PC-3 (cell line): ENCODE measurements at regions of chr5 and their contacts with region 1.

Region 1: GRCh38 chr5:80255732-80256479 is at the start of gene SERINC5:
- DNase-seq: peak; percentile 51
- ATAC-seq: peak; percentile 72
- H3K4me3 ChIP-seq: peak within 1 kb of the TSS; percentile 88
- H3K27ac ChIP-seq: peak within 1 kb of the TSS; percentile 44
- H3K4me1 ChIP-seq: peaks cover 19% of the 10 kb centered on the region
- H3K27me3 ChIP-seq: no peaks in the 10 kb centered on the region
- CTCF ChIP-seq: no peak
- total RNA-seq, gene SERINC5: 5.7 and 6.9 TPM in 2 replicates

Region 2: DNA sequence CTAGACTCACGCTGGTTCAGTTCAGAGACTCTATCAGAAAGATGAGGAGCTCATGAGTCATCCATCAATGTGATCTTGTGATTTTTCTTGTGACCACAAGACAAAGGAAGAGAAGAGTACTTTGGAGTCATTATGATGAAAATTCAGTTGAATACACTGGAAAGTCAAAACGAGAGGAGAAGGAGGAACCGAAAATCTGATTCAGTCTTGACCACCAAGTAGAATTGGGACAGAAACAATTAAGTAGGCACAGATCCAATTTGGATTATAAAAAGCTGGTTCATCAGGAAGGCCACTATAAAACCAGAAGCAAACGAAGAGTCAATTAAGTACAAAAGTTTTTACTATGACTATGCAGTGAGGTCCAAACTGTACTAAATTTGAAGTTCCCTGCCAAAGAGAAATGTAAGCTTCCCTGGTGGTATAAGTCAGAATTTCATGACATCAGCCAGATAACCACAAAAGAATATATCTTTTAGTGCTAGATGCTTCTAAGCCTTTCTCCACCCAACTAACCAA is 129.9 kb before region 1 on chr5:
- CTCF ChIA-PET with region 1: no interaction called
- POLR2A ChIA-PET with region 1: no interaction called
- intact Hi-C with region 1: loop called (anchors 10 kb)
- DNase-seq: peak; percentile 75
- ATAC-seq: peak; percentile 88
- H3K4me3 ChIP-seq: no peak overlapping the region
- H3K27ac ChIP-seq: peak overlapping the region; percentile 64
- H3K4me1 ChIP-seq: peaks cover 15% of the 10 kb centered on the region
- H3K27me3 ChIP-seq: no peaks in the 10 kb centered on the region
- CTCF ChIP-seq: no peak

Region 3: DNA sequence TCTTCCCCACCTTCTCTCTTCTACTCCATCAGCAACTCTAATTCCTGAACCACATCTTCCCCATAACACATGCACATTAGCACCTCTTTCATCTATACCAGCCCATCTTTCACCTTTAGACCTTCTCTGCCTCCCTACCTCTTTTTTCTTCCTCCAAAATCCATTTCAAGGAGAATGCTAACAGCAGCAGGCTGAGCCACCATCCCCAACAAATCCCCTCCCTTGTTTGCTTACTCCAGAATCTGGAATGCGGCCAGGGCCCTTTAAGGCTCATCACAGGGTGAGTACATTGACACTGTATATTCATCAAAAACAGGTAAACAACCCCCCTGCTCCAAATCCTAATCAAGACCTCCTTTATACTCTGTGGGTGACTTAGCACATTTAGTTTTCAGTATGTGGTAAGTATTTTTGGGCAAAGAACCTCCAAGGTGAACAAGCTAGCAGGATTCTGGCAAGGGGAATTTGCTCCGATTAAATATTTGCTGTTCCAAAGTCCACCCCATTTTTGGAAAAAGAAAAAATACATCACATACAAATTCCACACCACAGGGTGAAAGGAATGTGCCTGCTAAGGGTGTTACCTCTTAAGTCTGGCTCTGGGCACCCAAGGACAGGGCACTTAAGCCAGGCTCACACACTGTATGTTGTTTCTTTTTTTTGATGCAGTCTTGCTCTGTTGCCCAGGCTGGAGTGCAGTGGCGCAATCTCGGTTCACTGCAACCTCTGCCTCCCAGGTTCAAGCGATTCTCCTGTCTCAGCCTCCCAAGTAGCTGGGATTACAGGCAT is 71.5 kb before region 1 on chr5:
- CTCF ChIA-PET with region 1: interaction called, 4 read pairs
- POLR2A ChIA-PET with region 1: no interaction called
- intact Hi-C with region 1: loop called (anchors 2 kb)
- DNase-seq: peak; percentile 67
- ATAC-seq: peak; percentile 42
- H3K4me3 ChIP-seq: no peak overlapping the region
- H3K27ac ChIP-seq: peak overlapping the region; percentile 62
- H3K4me1 ChIP-seq: peaks cover 50% of the 10 kb centered on the region
- H3K27me3 ChIP-seq: no peaks in the 10 kb centered on the region
- CTCF ChIP-seq: no peak

Region 4: GRCh38 chr5:80308526-80308925 is 52.6 kb after region 1 on chr5:
- CTCF ChIA-PET with region 1: interaction called, 11 read pairs
- POLR2A ChIA-PET with region 1: no interaction called
- intact Hi-C with region 1: no loop called
- DNase-seq: no peak
- ATAC-seq: no peak
- H3K4me3 ChIP-seq: no peak overlapping the region
- H3K27ac ChIP-seq: no peak overlapping the region
- H3K4me1 ChIP-seq: no peaks in the 10 kb centered on the region
- H3K27me3 ChIP-seq: no peaks in the 10 kb centered on the region
- CTCF ChIP-seq: no peak